ENCODE measurements at regions of chr3 and their contacts with region 1.

Region 1: DNA sequence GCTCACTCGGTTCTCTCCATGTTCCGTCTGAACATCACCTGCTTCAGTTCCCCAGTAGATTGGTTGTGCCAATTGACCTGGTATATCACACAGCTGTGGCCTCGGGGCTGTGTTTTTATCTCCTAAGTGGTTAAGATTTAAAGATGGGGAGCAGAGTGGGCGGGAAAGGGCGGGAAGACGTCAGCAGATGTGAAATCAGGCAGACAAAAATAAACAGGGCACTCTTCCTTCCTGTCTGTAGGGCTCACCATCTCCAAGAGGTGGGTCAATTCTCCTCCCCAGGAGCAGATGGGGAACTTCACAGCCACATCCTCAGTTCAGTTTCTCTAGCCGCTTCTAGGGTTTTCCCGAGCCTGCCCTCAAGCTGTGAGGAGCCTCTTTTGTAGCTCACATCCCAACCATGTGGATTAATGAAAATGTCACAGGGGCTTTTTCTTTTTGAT is 26.8 kb upstream of the LIMD1 start:
- DNase-seq: peak; percentile 79
- H3K4me3 Mint-ChIP-seq: peak overlapping the region; percentile 63
- H3K27ac Mint-ChIP-seq: peak overlapping the region; percentile 92
- H3K4me1 Mint-ChIP-seq: peaks cover 42% of the 10 kb centered on the region
- H3K27me3 Mint-ChIP-seq: no peaks in the 10 kb centered on the region

Region 2: GRCh38 chr3:45528429-45528828 is 39.3 kb before region 1 on chr3:
- intact Hi-C with region 1: loop called (anchors 5 kb)
- DNase-seq: no peak
- H3K4me3 Mint-ChIP-seq: no peak overlapping the region
- H3K27ac Mint-ChIP-seq: peak overlapping the region; percentile 61
- H3K4me1 Mint-ChIP-seq: peaks cover 14% of the 10 kb centered on the region
- H3K27me3 Mint-ChIP-seq: no peaks in the 10 kb centered on the region